ENCODE measurements at regions of chr19 and their contacts with region 1.

Region 1: DNA sequence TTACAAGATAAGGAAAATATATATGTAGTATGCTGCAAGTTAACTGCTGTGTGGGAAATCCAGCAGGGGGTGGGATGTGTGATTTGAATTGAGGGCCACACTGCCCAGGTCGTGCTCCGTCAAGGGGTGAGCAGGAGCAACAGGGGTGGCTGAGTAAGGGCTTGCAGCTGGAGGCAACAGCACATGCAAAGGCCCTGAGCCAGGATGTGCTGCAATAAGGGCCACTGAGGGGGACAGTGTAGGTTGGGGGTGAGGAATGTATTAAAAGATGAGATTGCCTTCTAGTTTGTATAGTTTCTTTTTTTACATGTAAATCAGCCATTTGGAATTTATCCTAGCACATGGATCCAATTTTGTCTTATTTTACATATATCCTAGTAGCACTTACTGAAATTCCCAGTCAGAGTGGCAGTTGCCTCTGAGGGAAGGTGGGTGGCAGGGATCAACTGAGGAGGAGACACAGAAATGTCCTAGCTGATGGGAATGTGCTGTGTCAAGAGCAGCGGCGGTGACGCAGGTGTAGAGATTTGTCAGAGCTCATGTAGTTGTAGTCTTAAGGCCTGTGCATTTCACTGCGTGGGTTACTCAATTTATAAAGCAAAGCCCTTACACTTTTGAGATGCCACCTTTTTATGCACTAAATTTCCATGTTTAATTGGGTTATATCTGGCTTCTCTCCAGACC is 5.4 kb upstream of the RBM42 start:
- DNase-seq: no peak
- ATAC-seq: no peak
- H3K4me3 Mint-ChIP-seq: no peak overlapping the region
- H3K27ac Mint-ChIP-seq: no peak overlapping the region
- H3K4me1 Mint-ChIP-seq: peaks cover 4% of the 10 kb centered on the region
- H3K27me3 Mint-ChIP-seq: no peaks in the 10 kb centered on the region
- CTCF ChIP-seq: no peak

Region 2: GRCh38 chr19:35518313-35518712 is 105.2 kb before region 1 on chr19:
- CTCF ChIA-PET with region 1: no interaction called
- POLR2A ChIA-PET with region 1: no interaction called
- intact Hi-C with region 1: no loop called
- DNase-seq: no peak
- ATAC-seq: no peak
- H3K4me3 Mint-ChIP-seq: no peak overlapping the region
- H3K27ac Mint-ChIP-seq: no peak overlapping the region
- H3K4me1 Mint-ChIP-seq: no peaks in the 10 kb centered on the region
- H3K27me3 Mint-ChIP-seq: peaks cover 24% of the 10 kb centered on the region
- CTCF ChIP-seq: no peak

Region 3: GRCh38 chr19:35637165-35637564 is 13.7 kb after region 1 on chr19:
- CTCF ChIA-PET with region 1: no interaction called
- POLR2A ChIA-PET with region 1: interaction called, 20 read pairs
- intact Hi-C with region 1: no loop called
- DNase-seq: no peak
- ATAC-seq: no peak
- H3K4me3 Mint-ChIP-seq: no peak overlapping the region
- H3K27ac Mint-ChIP-seq: no peak overlapping the region
- H3K4me1 Mint-ChIP-seq: peaks cover 9% of the 10 kb centered on the region
- H3K27me3 Mint-ChIP-seq: no peaks in the 10 kb centered on the region
- CTCF ChIP-seq: no peak